ENCODE measurements at regions of chr14 and their contacts with region 1.

Region 1: GRCh38 chr14:56463271-56463890 is 116.2 kb upstream of the TMEM260 start:
- DNase-seq: peak; percentile 68
- H3K4me3 ChIP-seq: no peak overlapping the region
- H3K27ac ChIP-seq: no peak overlapping the region
- H3K4me1 ChIP-seq: peaks cover 10% of the 10 kb centered on the region
- H3K27me3 ChIP-seq: no peaks in the 10 kb centered on the region
- CTCF ChIP-seq: no peak

Region 2: GRCh38 chr14:55417955-55418354 is 1045.4 kb before region 1 on chr14:
- CTCF ChIA-PET with region 1: interaction called, 14 read pairs
- POLR2A ChIA-PET with region 1: no interaction called
- intact Hi-C with region 1: no loop called
- DNase-seq: no peak
- H3K4me3 ChIP-seq: no peak overlapping the region
- H3K27ac ChIP-seq: no peak overlapping the region
- H3K4me1 ChIP-seq: no peaks in the 10 kb centered on the region
- H3K27me3 ChIP-seq: no peaks in the 10 kb centered on the region
- CTCF ChIP-seq: no peak

Measured in A673 (cell line).